Activated T-helper 2 cell treated with anti-CD3 and anti-CD28 coated beads, Interferon-gamma antibody, Interleukin-2, Interleukin-4, amounts not matched to agents 10 μg/mL and 5 μg/mL and 100 μg/mL, durations not matched to agents 14 hours and 24 hours and 36 hours (primary cell): ENCODE measurements at regions of chr2 and their contacts with region 1.

Region 1: DNA sequence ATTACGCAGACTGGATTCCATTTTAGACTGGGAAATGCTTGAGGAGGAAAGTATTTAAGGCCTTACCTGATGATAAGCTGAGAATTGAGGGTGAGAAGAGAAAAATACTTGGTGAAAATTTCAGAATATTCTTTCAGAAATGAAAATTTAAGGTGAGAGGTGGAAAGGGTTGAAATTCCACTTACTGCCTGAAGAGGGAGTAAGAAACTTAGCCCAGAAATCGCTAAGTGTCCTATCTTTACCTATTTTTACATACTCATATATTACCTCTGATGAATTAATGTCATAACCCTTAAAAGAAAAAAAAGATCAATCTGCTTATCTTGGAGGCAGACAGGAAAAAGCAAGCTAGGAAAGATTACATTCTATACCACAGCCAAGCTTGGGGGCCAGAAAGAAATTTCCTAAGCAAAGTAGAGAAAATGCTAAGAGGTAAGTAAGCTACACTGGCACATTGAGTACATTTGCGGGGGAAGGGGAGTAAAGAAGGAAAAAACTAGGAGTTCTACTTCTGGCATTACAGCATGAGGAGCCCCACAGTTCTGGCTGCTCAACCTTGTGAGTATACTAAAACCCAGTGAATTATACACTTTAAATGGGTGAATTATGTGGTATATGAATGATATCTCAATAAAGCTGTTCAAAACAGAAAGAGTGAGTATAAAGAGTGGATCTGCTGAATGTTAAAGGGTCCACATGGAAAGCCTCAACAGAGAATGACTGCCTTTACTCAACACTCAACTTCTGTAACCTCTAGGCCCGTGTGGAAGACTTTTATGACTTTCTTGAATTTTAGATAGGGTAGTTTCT is 33.8 kb downstream of the SMC6 start:
- DNase-seq: no peak
- H3K4me3 Mint-ChIP-seq: no peak overlapping the region
- H3K27ac Mint-ChIP-seq: no peak overlapping the region
- H3K4me1 Mint-ChIP-seq: no peaks in the 10 kb centered on the region
- H3K27me3 Mint-ChIP-seq: no peaks in the 10 kb centered on the region

Region 2: DNA sequence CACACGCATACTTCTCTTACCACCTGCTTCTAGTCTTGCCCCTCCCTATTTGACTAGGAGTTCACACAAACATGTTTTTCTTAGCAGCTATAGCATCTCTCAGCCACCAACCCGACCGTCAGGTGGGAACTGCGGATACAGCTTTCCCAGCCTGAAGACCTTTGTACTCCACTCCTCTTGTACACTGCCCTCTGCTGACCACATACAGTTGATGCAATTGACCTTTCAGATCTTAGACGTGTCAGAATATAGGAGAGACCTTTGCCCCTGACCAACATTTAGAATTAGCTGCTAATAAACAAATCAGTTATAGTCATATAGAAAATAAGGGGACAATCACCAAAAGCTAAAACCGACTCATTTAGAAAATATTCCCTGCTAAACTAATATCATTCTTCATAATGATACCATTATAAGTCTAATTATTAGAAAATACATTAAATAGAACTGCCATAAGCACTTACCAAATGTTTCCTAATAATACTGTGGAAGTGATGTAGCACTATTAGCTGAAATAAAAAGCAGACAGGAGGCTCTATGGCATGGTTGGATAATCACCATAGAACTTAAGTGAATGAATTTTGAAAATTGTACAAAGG is 409.9 kb before region 1 on chr2:
- intact Hi-C with region 1: no loop called
- DNase-seq: no peak
- H3K4me3 Mint-ChIP-seq: no peak overlapping the region
- H3K27ac Mint-ChIP-seq: no peak overlapping the region
- H3K4me1 Mint-ChIP-seq: peaks cover 14% of the 10 kb centered on the region
- H3K27me3 Mint-ChIP-seq: peaks cover 13% of the 10 kb centered on the region

Region 3: DNA sequence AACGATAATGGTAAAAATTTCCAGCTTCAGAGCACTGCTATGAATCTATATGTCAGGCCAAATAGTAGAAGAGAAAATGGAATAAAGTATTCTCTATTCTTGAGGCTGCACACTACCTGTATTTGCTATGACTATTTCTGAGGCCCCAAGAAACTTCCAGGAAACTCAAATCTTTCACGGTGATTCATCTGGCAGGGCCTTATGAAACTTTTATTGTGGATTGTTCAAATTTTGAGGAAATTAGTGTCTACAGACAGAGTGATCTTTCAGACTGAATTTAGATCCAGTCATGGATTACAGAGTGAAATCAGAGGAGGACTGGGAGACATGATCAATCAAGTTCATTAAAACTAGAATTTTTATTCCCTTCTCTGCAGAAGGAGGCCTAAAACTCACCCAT is 183.4 kb before region 1 on chr2:
- intact Hi-C with region 1: no loop called
- DNase-seq: no peak
- H3K4me3 Mint-ChIP-seq: no peak overlapping the region
- H3K27ac Mint-ChIP-seq: no peak overlapping the region
- H3K4me1 Mint-ChIP-seq: peaks cover 7% of the 10 kb centered on the region
- H3K27me3 Mint-ChIP-seq: peaks cover 49% of the 10 kb centered on the region

Region 4: GRCh38 chr2:17628349-17629261 is 91.2 kb before region 1 on chr2:
- intact Hi-C with region 1: no loop called
- DNase-seq: no peak
- H3K4me3 Mint-ChIP-seq: no peak overlapping the region
- H3K27ac Mint-ChIP-seq: no peak overlapping the region
- H3K4me1 Mint-ChIP-seq: peaks cover 7% of the 10 kb centered on the region
- H3K27me3 Mint-ChIP-seq: no peaks in the 10 kb centered on the region

Region 5: GRCh38 chr2:17689010-17689409 is 30.8 kb before region 1 on chr2:
- intact Hi-C with region 1: no loop called
- DNase-seq: no peak
- H3K4me3 Mint-ChIP-seq: no peak overlapping the region
- H3K27ac Mint-ChIP-seq: no peak overlapping the region
- H3K4me1 Mint-ChIP-seq: no peaks in the 10 kb centered on the region
- H3K27me3 Mint-ChIP-seq: no peaks in the 10 kb centered on the region

Region 6: DNA sequence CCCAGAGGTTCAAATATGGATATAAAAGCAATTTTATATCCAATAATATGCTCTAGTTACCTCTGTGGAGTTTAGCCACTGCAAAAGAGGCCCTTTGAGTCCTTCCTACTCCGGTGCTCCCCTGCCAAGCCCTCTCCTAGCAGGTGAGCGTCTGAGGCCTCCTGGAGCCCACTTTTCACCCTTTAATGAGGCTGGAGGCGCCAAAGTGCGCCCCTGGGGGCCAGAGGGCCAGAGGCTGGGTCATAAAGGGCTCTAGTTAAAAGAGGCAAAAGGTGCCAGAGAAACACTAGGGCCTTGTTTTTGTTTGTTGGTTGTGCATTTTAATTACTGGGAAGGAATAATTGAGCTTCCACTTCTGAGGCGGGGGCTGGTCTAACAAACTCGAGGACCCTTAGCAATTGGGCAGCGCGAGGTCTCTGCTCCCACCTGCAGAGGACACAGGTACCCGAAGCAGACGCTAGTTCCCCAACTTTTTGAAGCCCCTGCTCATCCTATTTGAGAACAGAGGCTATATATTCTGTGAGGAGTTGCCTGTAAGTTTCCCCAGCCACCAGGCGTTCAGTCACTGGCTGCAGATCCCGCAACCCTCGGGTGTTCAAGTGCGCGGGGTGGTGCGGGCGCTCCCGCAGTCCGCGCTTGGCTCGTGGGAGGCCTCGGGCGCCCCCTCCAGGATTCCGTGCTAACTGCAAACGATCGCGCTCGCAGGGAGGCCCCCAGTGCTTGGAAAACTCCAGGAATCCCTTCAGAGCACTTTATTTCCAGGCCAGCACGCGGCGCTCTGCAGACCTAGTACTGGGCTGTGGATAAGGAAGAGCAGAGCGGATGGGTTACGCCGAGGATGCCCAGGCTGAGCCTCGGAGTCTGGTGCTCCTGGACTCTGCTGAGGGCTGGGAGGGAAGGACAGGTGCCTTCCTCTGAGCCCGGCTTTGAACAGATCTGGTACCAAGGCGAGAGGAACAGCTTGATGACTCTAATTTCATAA is 110.6 kb after region 1 on chr2:
- intact Hi-C with region 1: loop called (anchors 1 kb)
- DNase-seq: peak; percentile 39
- H3K4me3 Mint-ChIP-seq: no peak overlapping the region
- H3K27ac Mint-ChIP-seq: no peak overlapping the region
- H3K4me1 Mint-ChIP-seq: no peaks in the 10 kb centered on the region
- H3K27me3 Mint-ChIP-seq: peaks cover 38% of the 10 kb centered on the region